ENCODE measurements at regions of chr13 and their contacts with region 1.

Region 1: DNA sequence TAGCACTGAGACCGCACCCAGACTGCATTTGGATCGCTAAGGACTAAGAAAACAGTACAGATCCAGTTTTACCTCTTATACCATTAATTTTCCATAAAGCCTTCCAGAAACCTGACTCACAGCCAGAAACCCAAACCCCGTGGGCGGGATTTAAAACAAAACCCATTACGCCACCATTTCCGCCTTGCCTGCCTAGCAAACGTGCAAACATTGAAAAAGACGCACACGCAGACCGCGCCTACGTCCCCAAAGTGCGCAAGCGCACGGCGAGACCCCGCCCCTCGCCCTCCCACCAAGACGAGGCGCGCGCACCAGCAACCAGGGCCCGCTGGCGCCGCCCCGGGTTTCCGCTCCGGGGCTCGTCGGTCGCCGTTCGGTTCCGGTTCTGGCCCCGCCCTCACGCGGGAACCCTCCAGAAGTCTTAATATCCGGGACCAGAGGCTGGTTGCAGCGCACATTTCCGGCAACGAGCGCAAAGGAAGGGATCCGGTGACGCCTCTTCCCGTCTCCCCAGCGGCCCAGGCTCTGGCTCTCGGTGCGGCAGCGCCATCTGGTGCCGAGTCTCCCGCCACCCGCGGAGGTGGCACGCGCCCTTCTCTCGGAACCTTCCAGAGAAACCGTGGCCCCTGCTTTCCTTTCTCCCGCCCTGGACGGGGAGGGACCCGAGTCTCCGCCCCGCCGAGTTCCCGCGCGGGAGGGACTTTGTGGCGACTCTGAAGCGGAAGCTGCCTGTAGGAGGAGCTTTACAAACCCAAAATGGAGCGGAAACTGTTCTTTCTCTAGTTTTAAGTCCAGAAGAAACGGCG is 256.9 kb upstream of the STARD13 start:
- DNase-seq: peak; percentile 95 to 100 (median 98)
- ATAC-seq: peak; percentile 79
- H3K4me3 ChIP-seq: peak overlapping the region; percentile 69
- H3K4me3 Mint-ChIP-seq: peak overlapping the region; percentile 99
- H3K27ac ChIP-seq: peak overlapping the region; percentile 97 to 98
- H3K27ac Mint-ChIP-seq: peak overlapping the region; percentile 98
- H3K4me1 ChIP-seq: peaks cover 31% of the 10 kb centered on the region
- H3K4me1 Mint-ChIP-seq: peaks cover 56% of the 10 kb centered on the region
- H3K27me3 ChIP-seq: no peaks in the 10 kb centered on the region
- H3K27me3 Mint-ChIP-seq: no peaks in the 10 kb centered on the region
- CTCF ChIP-seq: peak; percentile 84

Region 2: DNA sequence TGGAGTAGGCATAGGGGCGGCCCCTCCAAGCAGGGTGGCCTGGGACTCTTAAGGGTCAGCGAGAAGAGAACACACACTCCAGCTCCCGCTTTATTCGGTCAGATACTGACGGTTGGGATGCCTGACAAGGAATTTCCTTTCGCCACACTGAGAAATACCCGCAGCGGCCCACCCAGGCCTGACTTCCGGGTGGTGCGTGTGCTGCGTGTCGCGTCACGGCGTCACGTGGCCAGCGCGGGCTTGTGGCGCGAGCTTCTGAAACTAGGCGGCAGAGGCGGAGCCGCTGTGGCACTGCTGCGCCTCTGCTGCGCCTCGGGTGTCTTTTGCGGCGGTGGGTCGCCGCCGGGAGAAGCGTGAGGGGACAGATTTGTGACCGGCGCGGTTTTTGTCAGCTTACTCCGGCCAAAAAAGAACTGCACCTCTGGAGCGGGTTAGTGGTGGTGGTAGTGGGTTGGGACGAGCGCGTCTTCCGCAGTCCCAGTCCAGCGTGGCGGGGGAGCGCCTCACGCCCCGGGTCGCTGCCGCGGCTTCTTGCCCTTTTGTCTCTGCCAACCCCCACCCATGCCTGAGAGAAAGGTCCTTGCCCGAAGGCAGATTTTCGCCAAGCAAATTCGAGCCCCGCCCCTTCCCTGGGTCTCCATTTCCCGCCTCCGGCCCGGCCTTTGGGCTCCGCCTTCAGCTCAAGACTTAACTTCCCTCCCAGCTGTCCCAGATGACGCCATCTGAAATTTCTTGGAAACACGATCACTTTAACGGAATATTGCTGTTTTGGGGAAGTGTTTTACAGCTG is 1227.1 kb before region 1 on chr13 and contains the starts of genes BRCA2 and ZAR1L:
- CTCF ChIA-PET with region 1: interaction called, 4 read pairs
- POLR2A ChIA-PET with region 1: interaction called, 12 read pairs
- intact Hi-C with region 1: loop called (anchors 5 kb)
- DNase-seq: peak; percentile 74 to 95 (median 82)
- ATAC-seq: peak; percentile 94
- H3K4me3 ChIP-seq: peak within 1 kb of the TSS; percentile 84
- H3K4me3 Mint-ChIP-seq: peak within 1 kb of the TSS; percentile 96
- H3K27ac ChIP-seq: peak within 1 kb of the TSS; percentile 99 to 100
- H3K27ac Mint-ChIP-seq: peak within 1 kb of the TSS; percentile 100
- H3K4me1 ChIP-seq: peaks cover 15% of the 10 kb centered on the region
- H3K4me1 Mint-ChIP-seq: peaks cover 16% of the 10 kb centered on the region
- H3K27me3 ChIP-seq: no peaks in the 10 kb centered on the region
- H3K27me3 Mint-ChIP-seq: no peaks in the 10 kb centered on the region
- CTCF ChIP-seq: no peak
- total RNA-seq, gene BRCA2: 1.9 to 2.4 TPM
- total RNA-seq, gene ZAR1L: not detected

Region 3: GRCh38 chr13:32737111-32737571 is 805.3 kb before region 1 on chr13:
- CTCF ChIA-PET with region 1: no interaction called
- POLR2A ChIA-PET with region 1: interaction called, 7 read pairs
- intact Hi-C with region 1: loop called in 1 of 2 experiments (anchors 1 kb)
- DNase-seq: peak in 3 of 14 experiments; percentile 57 to 75 (median 60)
- ATAC-seq: peak; percentile 87
- H3K4me3 ChIP-seq: peak overlapping the region; percentile 53
- H3K4me3 Mint-ChIP-seq: peak overlapping the region; percentile 90
- H3K27ac ChIP-seq: peak overlapping the region; percentile 50 to 77
- H3K27ac Mint-ChIP-seq: peak overlapping the region; percentile 97
- H3K4me1 ChIP-seq: no peaks in the 10 kb centered on the region
- H3K4me1 Mint-ChIP-seq: peaks cover 35% of the 10 kb centered on the region
- H3K27me3 ChIP-seq: no peaks in the 10 kb centered on the region
- H3K27me3 Mint-ChIP-seq: no peaks in the 10 kb centered on the region
- CTCF ChIP-seq: no peak

Region 4: GRCh38 chr13:33426131-33426530 is 116.4 kb before region 1 on chr13:
- CTCF ChIA-PET with region 1: no interaction called
- POLR2A ChIA-PET with region 1: no interaction called
- intact Hi-C with region 1: no loop called
- DNase-seq: no peak
- ATAC-seq: no peak
- H3K4me3 ChIP-seq: no peak overlapping the region
- H3K4me3 Mint-ChIP-seq: no peak overlapping the region
- H3K27ac ChIP-seq: no peak overlapping the region
- H3K27ac Mint-ChIP-seq: no peak overlapping the region
- H3K4me1 ChIP-seq: no peaks in the 10 kb centered on the region
- H3K4me1 Mint-ChIP-seq: no peaks in the 10 kb centered on the region
- H3K27me3 ChIP-seq: no peaks in the 10 kb centered on the region
- H3K27me3 Mint-ChIP-seq: peaks cover 15% of the 10 kb centered on the region
- CTCF ChIP-seq: no peak

Region 5: DNA sequence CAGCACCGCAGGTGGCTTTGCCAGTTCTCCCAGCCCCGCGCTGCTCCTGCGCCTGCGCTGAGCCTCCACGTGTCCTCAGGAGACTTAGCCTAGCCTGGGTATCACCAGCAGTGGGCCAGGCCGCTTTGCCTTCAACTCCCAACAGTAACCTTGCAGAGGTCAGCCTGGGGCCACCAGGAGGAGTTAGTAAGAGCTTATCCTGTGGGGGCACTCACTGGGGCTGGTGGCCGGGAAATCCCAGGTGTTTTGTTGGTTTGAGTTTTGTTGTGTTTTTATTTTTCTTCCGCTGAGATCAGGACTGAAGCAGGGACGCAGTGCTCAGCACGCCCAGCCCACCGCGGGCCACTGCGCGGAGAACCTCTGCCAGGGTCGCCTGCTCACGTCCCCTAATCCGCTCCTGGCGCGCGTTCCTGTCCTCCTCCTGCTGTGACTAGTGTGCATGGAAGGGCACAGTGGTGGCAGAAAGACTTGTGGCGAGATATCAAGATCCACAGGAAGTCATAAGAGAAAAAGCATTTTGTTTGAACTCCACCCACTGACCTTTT is 68.1 kb after region 1 on chr13:
- CTCF ChIA-PET with region 1: interaction called, 3 read pairs
- POLR2A ChIA-PET with region 1: interaction called, 17 read pairs
- intact Hi-C with region 1: no loop called
- DNase-seq: peak; percentile 11 to 83 (median 36)
- ATAC-seq: peak; percentile 76
- H3K4me3 ChIP-seq: peak overlapping the region; percentile 46
- H3K4me3 Mint-ChIP-seq: peak overlapping the region; percentile 71
- H3K27ac ChIP-seq: peak overlapping the region; percentile 23 to 66
- H3K27ac Mint-ChIP-seq: peak overlapping the region; percentile 78
- H3K4me1 ChIP-seq: peaks cover 25% of the 10 kb centered on the region
- H3K4me1 Mint-ChIP-seq: peaks cover 37% of the 10 kb centered on the region
- H3K27me3 ChIP-seq: no peaks in the 10 kb centered on the region
- H3K27me3 Mint-ChIP-seq: peaks cover 5% of the 10 kb centered on the region
- CTCF ChIP-seq: no peak

Region 6: GRCh38 chr13:33817901-33818706 is 275.6 kb after region 1 on chr13 and contains the start of gene RFC3:
- CTCF ChIA-PET with region 1: interaction called, 3 read pairs
- POLR2A ChIA-PET with region 1: interaction called, 27 read pairs
- intact Hi-C with region 1: loop called (anchors 2 to 5 kb)
- DNase-seq: peak; percentile 81 to 95 (median 85)
- ATAC-seq: peak; percentile 89
- H3K4me3 ChIP-seq: peak within 1 kb of the TSS; percentile 78
- H3K4me3 Mint-ChIP-seq: peak within 1 kb of the TSS; percentile 95
- H3K27ac ChIP-seq: peak within 1 kb of the TSS; percentile 37 to 57
- H3K27ac Mint-ChIP-seq: peak within 1 kb of the TSS; percentile 86
- H3K4me1 ChIP-seq: peaks cover 9% of the 10 kb centered on the region
- H3K4me1 Mint-ChIP-seq: peaks cover 14% of the 10 kb centered on the region
- H3K27me3 ChIP-seq: no peaks in the 10 kb centered on the region
- H3K27me3 Mint-ChIP-seq: no peaks in the 10 kb centered on the region
- CTCF ChIP-seq: no peak
- total RNA-seq, gene RFC3: 4.5 TPM

Measured in CD4-positive, alpha-beta T cell (primary cell).